Heart right ventricle (tissue), 16 donors: ENCODE measurements at regions of chr7 and their contacts with region 1.

Region 1: GRCh38 chr7:116027786-116028185 is 2.8 kb downstream of the TFEC start:
- DNase-seq: no peak
- ATAC-seq: no peak
- H3K4me3 ChIP-seq: peak overlapping the region in 2 of 10 donors; percentile 10 to 47
- H3K27ac ChIP-seq: peak overlapping the region in 1 of 10 donors; percentile 28
- H3K4me1 ChIP-seq: peaks cover 0 to 47% (median 0%) of the 10 kb centered on the region in 9 donors
- H3K27me3 ChIP-seq: no peaks in the 10 kb centered on the region
- CTCF ChIP-seq: no peak

Region 2: GRCh38 chr7:115475761-115476385 is 551.9 kb before region 1 on chr7:
- intact Hi-C with region 1: no loop called
- DNase-seq: no peak
- ATAC-seq: peak in 5 of 8 donors; percentile 42 to 85 (median 69)
- H3K4me3 ChIP-seq: peak overlapping the region in 2 of 10 donors; percentile 44 to 48
- H3K27ac ChIP-seq: no peak overlapping the region
- H3K4me1 ChIP-seq: peaks cover 0 to 17% (median 0%) of the 10 kb centered on the region in 9 donors
- H3K27me3 ChIP-seq: peaks cover 0 to 46% (median 28%) of the 10 kb centered on the region in 7 donors
- CTCF ChIP-seq: peak in 7 of 9 donors; percentile 15 to 55 (median 44)

Region 3: DNA sequence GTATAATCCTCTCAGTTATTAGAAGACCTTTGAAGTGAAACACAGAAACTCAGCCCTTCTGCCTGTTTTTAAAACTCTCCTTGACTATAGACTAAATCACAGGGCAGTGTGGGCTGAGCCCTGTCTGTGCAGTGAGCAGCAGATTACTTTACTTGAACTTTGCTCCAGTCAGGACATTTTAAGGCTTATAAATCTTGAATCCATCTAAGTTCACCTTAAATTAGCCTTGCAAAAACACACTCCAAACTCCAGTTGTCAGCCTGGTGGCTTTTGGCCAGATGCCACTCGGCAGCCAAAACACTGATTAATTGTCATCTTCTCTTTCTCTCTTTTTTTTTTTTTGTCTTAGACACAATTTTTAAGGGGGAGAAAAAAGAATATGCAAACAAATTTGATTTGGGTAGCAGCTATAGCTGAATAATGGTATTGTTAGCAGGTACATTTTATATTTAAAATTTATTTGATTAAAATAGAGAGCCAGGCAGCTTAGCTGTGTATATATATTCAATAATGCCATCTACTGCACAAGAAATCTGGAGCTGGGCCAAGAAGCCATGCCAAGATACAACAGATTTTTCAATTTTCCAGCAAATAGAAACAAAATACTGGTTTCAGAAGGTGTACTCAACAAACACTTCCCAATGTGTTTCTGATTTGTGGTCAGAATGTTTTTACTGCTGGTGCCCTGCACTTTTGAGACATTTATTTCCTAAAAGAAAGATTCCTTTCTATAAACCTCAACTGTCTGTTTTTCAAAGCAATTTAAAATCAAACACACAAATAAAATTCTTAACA is 244.9 kb before region 1 on chr7:
- intact Hi-C with region 1: no loop called
- DNase-seq: no peak
- ATAC-seq: no peak
- H3K4me3 ChIP-seq: no peak overlapping the region
- H3K27ac ChIP-seq: no peak overlapping the region
- H3K4me1 ChIP-seq: no peaks in the 10 kb centered on the region
- H3K27me3 ChIP-seq: no peaks in the 10 kb centered on the region
- CTCF ChIP-seq: no peak

Region 4: DNA sequence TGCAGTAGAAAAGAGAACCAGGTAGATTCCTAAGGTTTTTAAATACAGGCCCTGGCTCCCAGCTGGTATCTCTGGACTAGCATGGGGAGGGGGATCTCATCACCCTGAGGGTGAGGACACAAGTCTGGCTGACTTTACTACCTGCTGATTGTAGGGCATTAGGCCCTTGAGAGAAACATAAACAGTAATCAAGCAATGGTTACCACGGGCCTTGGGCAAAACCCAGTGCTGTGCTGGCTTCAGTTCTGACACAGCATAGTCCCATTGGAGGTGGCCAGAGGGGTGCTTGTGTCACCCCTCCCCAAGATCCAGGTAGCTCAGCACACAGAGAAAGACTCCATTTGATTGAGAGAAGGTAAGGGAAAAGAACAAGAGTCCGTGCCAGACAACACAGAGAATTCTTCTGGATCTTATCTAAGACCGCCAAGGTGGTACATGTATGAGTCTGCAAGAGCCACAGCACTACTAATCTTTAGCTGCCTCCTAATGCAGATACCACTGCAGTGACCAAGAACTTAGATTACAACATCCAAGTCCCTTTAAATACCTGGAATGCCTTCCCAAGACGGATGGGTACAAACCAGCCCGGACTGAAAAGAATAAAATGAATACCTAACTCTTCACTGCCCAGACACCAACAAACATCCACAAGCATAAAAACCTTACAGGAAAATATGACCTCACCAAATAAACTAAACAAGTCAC is 30.7 kb before region 1 on chr7:
- intact Hi-C with region 1: loop called in 1 of 10 experiments (anchors 2 kb)
- DNase-seq: no peak
- ATAC-seq: no peak
- H3K4me3 ChIP-seq: no peak overlapping the region
- H3K27ac ChIP-seq: no peak overlapping the region
- H3K4me1 ChIP-seq: no peaks in the 10 kb centered on the region
- H3K27me3 ChIP-seq: no peaks in the 10 kb centered on the region
- CTCF ChIP-seq: no peak